Activated CD4-positive, alpha-beta memory T cell treated with anti-CD3 and anti-CD28 coated beads for 36 hours (primary cell): ENCODE measurements at regions of chr16 and their contacts with region 1.

Region 1: GRCh38 chr16:78770353-78771091 is 671.1 kb downstream of the WWOX start:
- DNase-seq: peak; percentile 93
- H3K4me3 Mint-ChIP-seq: peak overlapping the region; percentile 65
- H3K27ac Mint-ChIP-seq: peak overlapping the region; percentile 87
- H3K4me1 Mint-ChIP-seq: peaks cover 80% of the 10 kb centered on the region
- H3K27me3 Mint-ChIP-seq: no peaks in the 10 kb centered on the region

Region 2: DNA sequence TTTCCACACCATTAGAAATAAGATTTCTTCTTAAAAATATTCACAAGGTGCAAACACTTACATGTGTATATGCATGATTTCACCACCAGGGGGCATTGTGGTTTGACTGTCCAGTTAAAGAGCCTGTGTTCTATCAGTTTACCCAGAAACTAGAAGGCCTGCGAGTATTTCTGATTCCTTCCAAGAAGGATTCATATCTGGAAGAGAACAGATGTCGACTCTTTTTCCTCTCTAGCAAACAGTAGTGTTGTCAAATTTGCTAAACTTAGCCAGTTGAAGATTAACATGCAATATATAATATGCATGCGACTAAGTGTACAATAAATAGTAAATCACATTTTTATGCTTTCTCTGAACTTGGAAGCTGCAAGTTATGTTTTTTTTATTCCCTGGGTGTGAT is 266.9 kb before region 1 on chr16:
- CTCF ChIA-PET with region 1: interaction called, 6 read pairs
- POLR2A ChIA-PET with region 1: no interaction called
- intact Hi-C with region 1: loop called (anchors 1 kb)
- DNase-seq: peak; percentile 52
- H3K4me3 Mint-ChIP-seq: no peak overlapping the region
- H3K27ac Mint-ChIP-seq: no peak overlapping the region
- H3K4me1 Mint-ChIP-seq: no peaks in the 10 kb centered on the region
- H3K27me3 Mint-ChIP-seq: no peaks in the 10 kb centered on the region

Region 3: DNA sequence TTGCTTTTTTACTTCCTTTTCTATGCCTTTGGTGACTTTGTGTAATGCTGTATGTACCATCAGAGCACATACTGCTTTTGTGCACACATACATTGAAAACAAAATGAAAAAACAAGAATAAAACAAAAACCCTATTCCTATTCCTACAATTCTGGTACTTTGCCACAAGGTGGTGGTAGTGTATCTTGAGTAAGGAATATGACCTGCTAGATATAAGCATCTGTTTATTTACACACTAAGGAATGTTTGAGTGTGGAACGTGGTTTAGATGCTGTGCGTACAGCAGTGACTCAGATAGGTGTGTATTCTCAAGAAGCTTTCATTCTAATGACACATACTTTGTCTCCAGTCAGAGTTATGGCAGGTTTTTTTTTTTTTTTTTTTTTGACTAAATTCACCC is 64.8 kb before region 1 on chr16:
- CTCF ChIA-PET with region 1: interaction called, 53 read pairs
- POLR2A ChIA-PET with region 1: interaction called, 14 read pairs
- intact Hi-C with region 1: loop called (anchors 1 kb)
- DNase-seq: peak; percentile 51
- H3K4me3 Mint-ChIP-seq: no peak overlapping the region
- H3K27ac Mint-ChIP-seq: peak overlapping the region; percentile 87
- H3K4me1 Mint-ChIP-seq: peaks cover 16% of the 10 kb centered on the region
- H3K27me3 Mint-ChIP-seq: no peaks in the 10 kb centered on the region

Region 4: DNA sequence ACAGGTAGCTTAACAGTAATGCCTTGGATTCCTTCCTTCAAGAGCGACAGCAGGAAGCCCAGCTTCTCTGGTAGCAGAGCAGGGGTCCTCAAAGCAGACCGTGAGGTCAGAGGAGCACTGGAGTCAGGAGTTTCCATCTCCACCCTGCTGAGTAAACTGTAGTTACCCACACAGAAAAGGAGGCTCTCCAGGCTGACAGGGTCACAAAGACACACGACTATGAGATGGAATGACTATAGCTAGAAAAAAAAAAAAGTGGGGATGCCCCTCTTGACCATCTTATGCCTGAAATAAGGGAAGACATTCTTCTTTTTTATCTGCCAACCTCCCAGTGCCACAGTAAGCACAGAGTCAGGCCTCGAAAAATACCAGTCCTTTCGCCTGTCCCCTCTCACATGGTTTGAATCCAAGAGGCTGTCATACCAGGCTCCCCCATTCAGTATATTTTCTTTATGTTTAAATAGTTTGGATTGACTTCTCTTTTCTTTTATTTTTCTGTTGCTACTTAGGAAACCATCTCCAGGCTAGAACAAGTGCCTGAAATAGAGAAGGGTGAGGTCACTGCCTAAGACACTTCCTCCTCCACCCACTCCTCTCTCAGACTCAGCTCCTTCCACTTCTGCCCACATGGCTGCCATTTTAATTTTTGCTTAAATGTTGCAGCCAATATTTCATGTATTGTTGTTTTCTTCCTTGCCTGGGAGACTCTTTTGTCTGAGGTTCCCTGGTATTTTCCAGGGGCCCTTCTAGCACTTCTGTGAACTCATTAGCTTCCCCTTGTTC is 122.6 kb after region 1 on chr16:
- CTCF ChIA-PET with region 1: interaction called, 12 read pairs
- POLR2A ChIA-PET with region 1: interaction called, 232 read pairs
- intact Hi-C with region 1: no loop called
- DNase-seq: peak; percentile 65
- H3K4me3 Mint-ChIP-seq: peak overlapping the region; percentile 20
- H3K27ac Mint-ChIP-seq: peak overlapping the region; percentile 96
- H3K4me1 Mint-ChIP-seq: peaks cover 86% of the 10 kb centered on the region
- H3K27me3 Mint-ChIP-seq: no peaks in the 10 kb centered on the region

Region 5: GRCh38 chr16:79758615-79759341 is 988.3 kb after region 1 on chr16:
- CTCF ChIA-PET with region 1: no interaction called
- POLR2A ChIA-PET with region 1: no interaction called
- intact Hi-C with region 1: loop called (anchors 1 kb)
- DNase-seq: no peak
- H3K4me3 Mint-ChIP-seq: no peak overlapping the region
- H3K27ac Mint-ChIP-seq: no peak overlapping the region
- H3K4me1 Mint-ChIP-seq: peaks cover 37% of the 10 kb centered on the region
- H3K27me3 Mint-ChIP-seq: peaks cover 4% of the 10 kb centered on the region